ENCODE measurements at regions of chr1 and their contacts with region 1.

Region 1: GRCh38 chr1:54488779-54489626 is 59.0 kb upstream of the ACOT11 start:
- DNase-seq: peak; percentile 73
- ATAC-seq: peak; percentile 80
- H3K4me3 Mint-ChIP-seq: peak overlapping the region; percentile 75
- H3K27ac Mint-ChIP-seq: peak overlapping the region; percentile 76
- H3K4me1 Mint-ChIP-seq: peaks cover 33% of the 10 kb centered on the region
- H3K27me3 Mint-ChIP-seq: peaks cover 45% of the 10 kb centered on the region

Region 2: DNA sequence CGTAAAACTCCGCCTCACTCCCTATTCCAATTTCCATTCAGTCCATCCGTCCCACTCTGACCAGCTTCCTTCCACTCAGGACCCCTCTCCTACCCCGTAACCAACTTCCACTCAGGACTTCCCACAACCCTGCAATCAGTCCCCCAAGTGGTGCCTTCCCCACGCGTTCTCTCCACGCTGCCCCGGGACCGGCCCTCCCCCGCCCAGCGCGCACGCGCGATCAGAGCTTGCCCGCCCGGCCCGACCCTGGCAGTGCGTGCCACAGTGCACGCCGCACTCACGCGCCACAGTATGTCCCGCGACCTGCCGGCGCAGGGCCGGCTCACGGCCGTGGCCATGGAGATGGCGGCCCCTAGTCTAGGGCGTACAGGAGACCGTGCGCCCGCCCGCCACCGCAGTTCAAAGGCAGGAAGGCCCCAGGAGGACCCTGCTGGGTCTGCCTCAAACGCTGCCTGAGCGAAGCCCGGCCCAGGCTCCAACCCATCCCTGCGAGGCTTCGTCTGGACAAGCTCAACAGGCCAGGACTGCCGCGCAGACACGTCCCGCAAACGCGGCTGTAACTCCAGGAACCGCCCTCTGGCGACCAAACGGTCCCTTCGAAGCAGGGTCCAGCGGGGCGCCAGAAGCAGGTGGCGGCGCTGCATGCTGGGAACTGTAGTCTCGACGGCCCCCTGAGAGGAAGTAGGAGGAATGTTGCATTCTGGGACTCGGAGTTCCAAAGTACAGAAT is 650.9 kb before region 1 on chr1 and contains the start of gene NDC1:
- CTCF ChIA-PET with region 1: no interaction called
- DNase-seq: peak; percentile 94
- ATAC-seq: peak; percentile 91
- H3K4me3 Mint-ChIP-seq: peak within 1 kb of the TSS; percentile 100
- H3K27ac Mint-ChIP-seq: peak within 1 kb of the TSS; percentile 97
- H3K4me1 Mint-ChIP-seq: peaks cover 28% of the 10 kb centered on the region
- H3K27me3 Mint-ChIP-seq: peaks cover 2% of the 10 kb centered on the region
- total RNA-seq, gene NDC1: 26.1 to 35.5 TPM

Region 3: GRCh38 chr1:54121482-54122134 is 367.4 kb before region 1 on chr1:
- CTCF ChIA-PET with region 1: interaction called, 29 read pairs
- DNase-seq: peak; percentile 78
- ATAC-seq: peak; percentile 87
- H3K4me3 Mint-ChIP-seq: no peak overlapping the region
- H3K27ac Mint-ChIP-seq: no peak overlapping the region
- H3K4me1 Mint-ChIP-seq: peaks cover 11% of the 10 kb centered on the region
- H3K27me3 Mint-ChIP-seq: peaks cover 6% of the 10 kb centered on the region

Region 4: DNA sequence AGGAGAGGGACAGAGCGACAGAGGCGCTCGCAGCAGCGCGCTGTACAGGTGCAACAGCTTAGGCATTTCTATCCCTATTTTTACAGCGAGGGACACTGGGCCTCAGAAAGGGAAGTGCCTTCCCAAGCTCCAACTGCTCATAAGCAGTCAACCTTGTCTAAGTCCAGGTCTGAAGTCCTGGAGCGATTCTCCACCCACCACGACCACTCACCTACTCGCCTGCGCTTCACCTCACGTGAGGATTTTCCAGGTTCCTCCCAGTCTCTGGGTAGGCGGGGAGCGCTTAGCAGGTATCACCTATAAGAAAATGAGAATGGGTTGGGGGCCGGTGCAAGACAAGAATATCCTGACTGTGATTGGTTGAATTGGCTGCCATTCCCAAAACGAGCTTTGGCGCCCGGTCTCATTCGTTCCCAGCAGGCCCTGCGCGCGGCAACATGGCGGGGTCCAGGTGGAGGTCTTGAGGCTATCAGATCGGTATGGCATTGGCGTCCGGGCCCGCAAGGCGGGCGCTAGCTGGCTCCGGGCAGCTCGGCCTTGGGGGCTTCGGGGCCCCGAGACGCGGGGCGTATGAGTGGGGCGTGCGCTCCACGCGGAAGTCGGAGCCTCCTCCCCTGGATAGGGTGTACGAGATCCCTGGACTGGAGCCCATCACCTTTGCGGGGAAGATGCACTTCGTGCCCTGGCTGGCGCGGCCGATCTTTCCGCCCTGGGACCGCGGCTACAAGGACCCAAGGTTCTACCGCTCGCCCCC is 289.1 kb before region 1 on chr1 and contains the starts of genes CYB5RL and MRPL37:
- CTCF ChIA-PET with region 1: interaction called, 18 read pairs
- DNase-seq: peak; percentile 95
- ATAC-seq: peak; percentile 98
- H3K4me3 Mint-ChIP-seq: peak within 1 kb of the TSS; percentile 92
- H3K27ac Mint-ChIP-seq: peak within 1 kb of the TSS; percentile 83
- H3K4me1 Mint-ChIP-seq: peaks cover 34% of the 10 kb centered on the region
- H3K27me3 Mint-ChIP-seq: no peaks in the 10 kb centered on the region
- total RNA-seq, gene CYB5RL: 14.5 to 17.0 TPM
- total RNA-seq, gene MRPL37: 122 to 147 TPM

Region 5: GRCh38 chr1:54310439-54311328 is 178.3 kb before region 1 on chr1:
- CTCF ChIA-PET with region 1: interaction called, 10 read pairs
- DNase-seq: peak; percentile 51
- ATAC-seq: peak; percentile 30
- H3K4me3 Mint-ChIP-seq: peak overlapping the region; percentile 17
- H3K27ac Mint-ChIP-seq: peak overlapping the region; percentile 89
- H3K4me1 Mint-ChIP-seq: peaks cover 49% of the 10 kb centered on the region
- H3K27me3 Mint-ChIP-seq: no peaks in the 10 kb centered on the region

Region 6: DNA sequence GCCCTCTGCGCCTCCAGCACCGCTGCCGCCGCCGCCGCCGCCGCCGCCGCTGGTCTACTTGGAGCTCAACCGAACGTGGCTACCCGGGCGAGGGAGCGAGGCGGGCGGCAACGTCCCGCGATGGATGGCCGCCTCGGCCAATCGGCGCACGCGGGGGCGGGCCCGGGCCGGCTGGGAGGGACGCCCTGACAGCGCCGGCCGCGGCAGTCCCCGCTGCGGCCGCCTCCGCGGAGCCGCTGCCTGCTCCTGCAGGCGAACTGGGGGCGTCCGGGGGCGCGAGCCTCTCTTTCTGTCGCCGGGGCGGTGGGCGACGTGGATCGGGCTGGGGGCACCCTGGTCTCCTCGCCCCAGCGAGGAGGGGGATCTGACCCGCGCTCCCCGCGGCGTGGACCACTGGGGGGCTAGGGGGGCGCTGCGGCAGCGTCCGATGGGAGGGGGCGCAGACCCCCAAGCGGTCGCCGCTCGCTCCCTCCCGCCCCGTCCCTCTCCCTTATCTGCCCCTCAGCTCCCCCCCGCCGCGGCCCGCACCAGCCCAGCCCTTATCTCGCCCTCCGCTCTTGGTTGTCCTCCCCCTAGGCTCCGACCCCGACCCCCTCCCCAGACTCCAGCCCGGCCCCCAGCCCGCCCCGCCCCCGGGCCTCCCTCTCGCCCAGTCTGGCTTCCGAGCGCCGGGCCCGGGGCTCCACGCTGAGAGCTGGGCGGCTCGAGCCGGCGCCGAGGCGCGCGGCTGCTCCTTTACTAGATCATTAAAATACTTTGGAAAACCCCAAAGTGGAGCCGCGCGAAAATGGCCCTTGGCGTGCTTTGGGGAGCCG is 82.5 kb before region 1 on chr1 and contains the start of gene SSBP3:
- CTCF ChIA-PET with region 1: interaction called, 45 read pairs
- DNase-seq: peak; percentile 92
- ATAC-seq: peak; percentile 94
- H3K4me3 Mint-ChIP-seq: peak within 1 kb of the TSS; percentile 89
- H3K27ac Mint-ChIP-seq: peak within 1 kb of the TSS; percentile 81
- H3K4me1 Mint-ChIP-seq: peaks cover 61% of the 10 kb centered on the region
- H3K27me3 Mint-ChIP-seq: no peaks in the 10 kb centered on the region
- total RNA-seq, gene SSBP3: 88.7 to 116 TPM

Region 7: GRCh38 chr1:54464482-54465146 is 24.4 kb before region 1 on chr1:
- CTCF ChIA-PET with region 1: interaction called, 21 read pairs
- DNase-seq: no peak
- ATAC-seq: peak; percentile 32
- H3K4me3 Mint-ChIP-seq: no peak overlapping the region
- H3K27ac Mint-ChIP-seq: peak overlapping the region; percentile 72
- H3K4me1 Mint-ChIP-seq: peaks cover 38% of the 10 kb centered on the region
- H3K27me3 Mint-ChIP-seq: peaks cover 4% of the 10 kb centered on the region

Region 8: GRCh38 chr1:54499360-54500106 is 10.5 kb after region 1 on chr1:
- CTCF ChIA-PET with region 1: interaction called, 18 read pairs
- DNase-seq: peak; percentile 64
- ATAC-seq: peak; percentile 84
- H3K4me3 Mint-ChIP-seq: peak overlapping the region; percentile 42
- H3K27ac Mint-ChIP-seq: no peak overlapping the region
- H3K4me1 Mint-ChIP-seq: peaks cover 15% of the 10 kb centered on the region
- H3K27me3 Mint-ChIP-seq: peaks cover 66% of the 10 kb centered on the region